MCF 10A (cell line): ENCODE measurements at regions of chr13 and their contacts with region 1.

Region 1: GRCh38 chr13:77002590-77003190 is 10.8 kb downstream of the CLN5 start:
- DNase-seq: peak; percentile 49
- H3K4me3 Mint-ChIP-seq: no peak overlapping the region
- H3K27ac Mint-ChIP-seq: peak overlapping the region; percentile 69
- H3K4me1 Mint-ChIP-seq: peaks cover 6% of the 10 kb centered on the region
- H3K27me3 Mint-ChIP-seq: no peaks in the 10 kb centered on the region
- CTCF ChIP-seq: peak; percentile 55

Region 2: GRCh38 chr13:77016888-77017623 is 14.4 kb after region 1 on chr13:
- CTCF ChIA-PET with region 1: interaction called, 38 read pairs
- POLR2A ChIA-PET with region 1: interaction called, 6 read pairs
- intact Hi-C with region 1: no loop called
- DNase-seq: no peak
- H3K4me3 Mint-ChIP-seq: no peak overlapping the region
- H3K27ac Mint-ChIP-seq: no peak overlapping the region
- H3K4me1 Mint-ChIP-seq: peaks cover 9% of the 10 kb centered on the region
- H3K27me3 Mint-ChIP-seq: no peaks in the 10 kb centered on the region
- CTCF ChIP-seq: no peak